Activated CD4-positive, alpha-beta memory T cell treated with anti-CD3 and anti-CD28 coated beads, Interleukin-2, amount 10 ng/mL, durations not matched to agents 7 days and 5 days (primary cell): ENCODE measurements at regions of chr11 and their contacts with region 1.

Region 1: GRCh38 chr11:116732271-116733042 is 40.3 kb downstream of the BUD13 start:
- DNase-seq: peak; percentile 67
- H3K4me3 Mint-ChIP-seq: no peak overlapping the region
- H3K27ac Mint-ChIP-seq: no peak overlapping the region
- H3K4me1 Mint-ChIP-seq: peaks cover 6% of the 10 kb centered on the region
- H3K27me3 Mint-ChIP-seq: no peaks in the 10 kb centered on the region

Region 2: GRCh38 chr11:116750070-116750718 is 17.7 kb after region 1 on chr11:
- CTCF ChIA-PET with region 1: interaction called, 10 read pairs
- POLR2A ChIA-PET with region 1: no interaction called
- DNase-seq: no peak
- H3K4me3 Mint-ChIP-seq: no peak overlapping the region
- H3K27ac Mint-ChIP-seq: no peak overlapping the region
- H3K4me1 Mint-ChIP-seq: no peaks in the 10 kb centered on the region
- H3K27me3 Mint-ChIP-seq: no peaks in the 10 kb centered on the region